Common myeloid progenitor, CD34-positive (primary cell): ENCODE measurements at regions of chr11 and their contacts with region 1.

Region 1: GRCh38 chr11:65095974-65096806 is at the start of gene VPS51:
- DNase-seq: peak; percentile 94 to 96 (median 96)
- H3K4me3 ChIP-seq: peak within 1 kb of the TSS; percentile 47 to 91 (median 78)
- H3K27ac ChIP-seq: peak within 1 kb of the TSS; percentile 68 to 86
- H3K4me1 ChIP-seq: peaks cover 4 to 15% (median 9%) of the 10 kb centered on the region in 4 experiments
- H3K27me3 ChIP-seq: no peaks in the 10 kb centered on the region

Region 2: DNA sequence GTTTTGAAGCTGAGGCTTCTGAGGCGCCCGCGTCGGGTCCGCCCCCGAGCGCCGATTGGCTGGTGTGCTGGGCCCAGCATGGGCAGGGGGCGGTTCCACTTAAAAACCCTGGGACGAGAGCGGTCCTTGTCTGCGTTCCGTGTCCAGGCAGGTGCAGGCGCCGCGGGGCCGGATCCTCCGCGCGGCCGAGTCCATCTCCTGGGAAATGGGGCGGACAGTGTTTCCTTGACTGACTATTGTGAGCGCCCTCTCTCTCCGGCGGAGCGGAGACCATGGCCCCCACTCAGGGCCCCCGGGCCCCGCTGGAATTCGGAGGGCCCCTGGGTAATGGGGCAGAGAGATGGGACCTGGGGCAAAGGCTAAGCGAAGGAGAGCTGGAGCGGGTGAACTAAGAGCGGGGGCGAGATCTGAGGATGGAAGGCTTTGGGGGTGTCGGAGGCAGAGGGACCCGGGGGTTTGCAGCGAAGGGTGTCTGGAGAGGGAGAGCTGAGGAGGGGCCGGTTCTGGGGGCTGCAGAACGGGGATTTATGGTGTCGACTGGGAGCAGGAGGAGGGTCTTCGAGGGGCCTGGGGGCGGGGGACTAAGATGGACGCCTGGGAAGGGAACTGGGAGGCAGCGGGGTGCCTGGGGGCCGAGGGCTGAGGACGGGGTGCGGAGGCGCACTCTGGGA is 15.7 kb after region 1 on chr11 and contains the start of gene TM7SF2:
- CTCF ChIA-PET with region 1: interaction called, 56 read pairs
- POLR2A ChIA-PET with region 1: interaction called, 5 read pairs
- DNase-seq: peak; percentile 91 to 95 (median 94)
- H3K4me3 ChIP-seq: peak within 1 kb of the TSS; percentile 52 to 80 (median 74)
- H3K27ac ChIP-seq: peak within 1 kb of the TSS in 1 of 2 experiments; percentile 61
- H3K4me1 ChIP-seq: peaks cover 0 to 51% (median 40%) of the 10 kb centered on the region in 4 experiments
- H3K27me3 ChIP-seq: no peaks in the 10 kb centered on the region